Endothelial cell of umbilical vein (primary cell): ENCODE measurements at regions of chr3 and their contacts with region 1.

Region 1: GRCh38 chr3:101573449-101574387 is at the start of gene PCNP:
- DNase-seq: peak; percentile 99
- H3K4me3 ChIP-seq: peak within 1 kb of the TSS; percentile 23 to 95 (median 87)
- H3K27ac ChIP-seq: peak within 1 kb of the TSS; percentile 90
- H3K4me1 ChIP-seq: peaks cover 8% of the 10 kb centered on the region
- H3K27me3 ChIP-seq: no peaks in the 10 kb centered on the region
- CTCF ChIP-seq: peak; percentile 74 to 81
- POLR2A ChIP-seq: peak; percentile 78
- total RNA-seq, gene PCNP: 137 and 155 TPM in 2 replicates

Region 2: GRCh38 chr3:101377209-101377608 is 196.5 kb before region 1 on chr3:
- CTCF ChIA-PET with region 1: no interaction called
- POLR2A ChIA-PET with region 1: no interaction called
- dilution Hi-C with region 1: no loop called
- intact Hi-C with region 1: no loop called
- DNase-seq: peak; percentile 1
- H3K4me3 ChIP-seq: no peak overlapping the region
- H3K27ac ChIP-seq: no peak overlapping the region
- H3K4me1 ChIP-seq: no peaks in the 10 kb centered on the region
- H3K27me3 ChIP-seq: no peaks in the 10 kb centered on the region
- CTCF ChIP-seq: no peak
- POLR2A ChIP-seq: no peak

Region 3: DNA sequence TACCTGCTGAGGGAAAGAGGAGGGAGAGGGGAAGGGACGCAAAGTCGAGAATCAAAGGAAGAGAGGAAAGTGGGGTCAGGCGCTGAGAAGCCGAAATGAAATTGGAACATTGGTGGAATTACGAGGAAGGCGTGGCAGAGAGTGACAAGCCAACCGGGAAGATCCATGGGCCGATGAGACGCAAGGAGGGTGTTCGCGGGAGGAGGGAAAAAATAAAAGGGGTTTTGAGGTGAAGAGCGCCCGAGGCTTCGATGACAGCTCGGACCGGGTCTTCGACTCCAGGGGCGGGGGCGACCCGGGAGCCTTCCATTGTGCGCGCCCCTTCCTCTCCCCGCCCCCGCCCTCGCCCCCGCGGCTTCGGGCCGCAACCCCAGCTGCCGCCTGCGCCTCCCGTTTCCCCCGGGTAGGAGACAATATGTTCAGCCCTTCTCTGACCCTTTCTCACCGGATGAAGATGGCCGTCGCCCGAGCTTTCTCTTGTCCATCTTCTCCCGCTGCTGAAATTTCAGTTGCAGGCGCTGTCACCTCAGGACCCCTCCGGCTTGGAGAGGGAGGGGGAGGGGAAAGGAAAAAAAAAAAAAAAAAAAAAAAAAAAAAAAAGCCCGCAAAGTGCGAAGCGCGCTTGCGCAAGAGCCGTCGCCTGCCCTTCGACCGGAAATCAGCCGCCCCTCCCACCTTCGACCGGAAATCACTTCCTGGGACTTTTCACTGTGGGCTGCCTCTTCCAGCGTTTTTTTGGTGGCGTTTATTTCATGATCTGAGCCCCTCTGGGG is 60.9 kb before region 1 on chr3 and contains the start of gene SENP7:
- CTCF ChIA-PET with region 1: interaction called, 7 read pairs
- POLR2A ChIA-PET with region 1: interaction called, 3 read pairs
- dilution Hi-C with region 1: no loop called
- intact Hi-C with region 1: loop called (anchors 1 kb)
- DNase-seq: peak; percentile 86
- H3K4me3 ChIP-seq: peak within 1 kb of the TSS; percentile 70 to 91 (median 74)
- H3K27ac ChIP-seq: peak within 1 kb of the TSS; percentile 93
- H3K4me1 ChIP-seq: peaks cover 13% of the 10 kb centered on the region
- H3K27me3 ChIP-seq: no peaks in the 10 kb centered on the region
- CTCF ChIP-seq: no peak
- POLR2A ChIP-seq: peak; percentile 81
- total RNA-seq, gene SENP7: 18.7 and 20.2 TPM in 2 replicates

Region 4: DNA sequence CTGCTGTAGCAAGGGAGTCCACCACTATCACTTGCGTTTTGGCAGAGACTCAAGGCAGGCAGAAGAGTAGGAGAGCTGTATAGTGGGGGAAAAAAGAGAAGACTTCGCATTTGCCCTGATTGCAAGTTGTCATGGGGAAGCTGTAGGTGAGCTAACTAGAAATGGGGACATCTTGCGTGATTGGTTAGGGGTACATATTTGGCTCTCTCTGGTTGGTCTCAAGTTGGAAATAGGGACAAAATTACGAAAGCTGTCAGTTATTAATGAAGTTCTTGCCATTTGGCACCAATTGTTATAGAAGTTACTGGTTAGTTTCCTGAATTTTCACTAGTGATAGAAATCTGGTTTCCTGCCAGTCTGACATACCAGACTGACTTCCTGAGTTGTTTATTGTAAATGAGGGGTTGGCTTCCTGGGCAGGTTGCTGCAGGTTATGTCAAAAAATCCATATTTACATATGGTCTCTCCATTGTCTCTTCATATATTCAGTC is 52.5 kb before region 1 on chr3:
- CTCF ChIA-PET with region 1: interaction called, 8 read pairs
- POLR2A ChIA-PET with region 1: no interaction called
- dilution Hi-C with region 1: no loop called
- intact Hi-C with region 1: loop called (anchors 1 kb)
- DNase-seq: peak; percentile 92
- H3K4me3 ChIP-seq: peak overlapping the region in 1 of 3 experiments; percentile 10
- H3K27ac ChIP-seq: peak overlapping the region; percentile 96
- H3K4me1 ChIP-seq: peaks cover 37% of the 10 kb centered on the region
- H3K27me3 ChIP-seq: no peaks in the 10 kb centered on the region
- CTCF ChIP-seq: no peak
- POLR2A ChIP-seq: peak; percentile 46

Region 5: DNA sequence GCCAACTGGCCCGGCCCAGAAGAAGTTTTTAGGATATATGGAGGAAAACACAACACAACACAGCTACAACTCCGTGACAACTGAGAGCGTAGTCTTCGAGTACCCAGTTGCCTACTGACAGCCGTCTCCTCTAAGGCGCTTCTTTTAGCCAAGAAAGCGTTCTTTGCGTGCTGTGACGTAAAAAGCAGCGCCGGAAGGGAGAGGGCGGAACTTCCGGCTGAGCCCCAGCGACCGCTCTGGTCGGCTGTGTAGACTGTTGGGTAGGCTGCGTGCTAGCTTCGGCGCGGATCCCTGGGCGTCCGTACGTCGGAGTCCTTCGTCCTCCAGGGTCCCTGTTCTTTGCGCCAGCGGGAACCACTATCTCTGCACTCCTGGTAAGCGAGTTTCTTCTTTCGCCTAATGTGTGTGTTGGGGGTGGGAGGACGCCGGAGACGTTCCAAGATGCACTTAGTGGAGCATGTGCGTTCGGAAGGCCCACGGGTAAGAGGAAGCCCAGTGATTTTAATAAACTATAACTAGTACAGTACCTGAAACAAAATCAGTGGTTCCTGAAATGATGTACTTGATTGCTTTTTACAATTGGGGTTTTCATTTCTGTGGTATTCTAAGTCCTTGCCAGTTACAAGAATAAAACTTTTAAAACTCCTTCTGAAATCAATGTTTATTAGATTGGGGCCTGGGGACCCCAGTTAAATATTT is 11.9 kb before region 1 on chr3 and contains the start of gene TRMT10C:
- CTCF ChIA-PET with region 1: interaction called, 20 read pairs
- POLR2A ChIA-PET with region 1: no interaction called
- dilution Hi-C with region 1: no loop called
- intact Hi-C with region 1: loop called (anchors 1 kb)
- DNase-seq: peak; percentile 95
- H3K4me3 ChIP-seq: peak within 1 kb of the TSS; percentile 97 to 98 (median 98)
- H3K27ac ChIP-seq: peak within 1 kb of the TSS; percentile 89
- H3K4me1 ChIP-seq: peaks cover 10% of the 10 kb centered on the region
- H3K27me3 ChIP-seq: peaks cover 0 to 10% of the 10 kb centered on the region in 2 experiments
- CTCF ChIP-seq: no peak
- POLR2A ChIP-seq: peak; percentile 94
- total RNA-seq, gene TRMT10C: 28.0 and 29.6 TPM in 2 replicates

Region 6: DNA sequence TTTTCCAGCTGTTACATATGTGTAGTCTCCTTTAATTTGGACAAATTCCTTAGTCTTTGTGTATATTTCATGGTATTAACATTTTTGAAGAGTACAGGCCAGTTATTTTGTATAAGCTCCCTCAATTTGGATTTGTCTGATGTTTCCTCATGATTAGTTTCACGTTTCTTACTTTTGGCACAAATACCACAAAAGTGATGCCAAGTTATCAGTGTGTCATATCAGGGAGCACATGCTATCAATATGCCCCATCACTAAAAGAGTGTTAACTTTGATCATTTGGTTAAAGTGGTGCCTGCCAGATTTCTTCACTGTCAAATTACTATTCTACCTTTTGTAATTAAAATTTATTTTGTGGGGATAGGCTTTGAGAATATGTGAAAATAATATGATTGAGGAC is 14.9 kb after region 1 on chr3:
- CTCF ChIA-PET with region 1: interaction called, 19 read pairs
- POLR2A ChIA-PET with region 1: interaction called, 3 read pairs
- dilution Hi-C with region 1: no loop called
- intact Hi-C with region 1: no loop called
- DNase-seq: no peak
- H3K4me3 ChIP-seq: no peak overlapping the region
- H3K27ac ChIP-seq: no peak overlapping the region
- H3K4me1 ChIP-seq: peaks cover 7% of the 10 kb centered on the region
- H3K27me3 ChIP-seq: no peaks in the 10 kb centered on the region
- CTCF ChIP-seq: no peak
- POLR2A ChIP-seq: no peak

Region 7: GRCh38 chr3:101635954-101636798 is 62.5 kb after region 1 on chr3:
- CTCF ChIA-PET with region 1: interaction called, 6 read pairs
- POLR2A ChIA-PET with region 1: no interaction called
- dilution Hi-C with region 1: no loop called
- intact Hi-C with region 1: loop called (anchors 1 kb)
- DNase-seq: peak; percentile 60
- H3K4me3 ChIP-seq: no peak overlapping the region
- H3K27ac ChIP-seq: no peak overlapping the region
- H3K4me1 ChIP-seq: no peaks in the 10 kb centered on the region
- H3K27me3 ChIP-seq: no peaks in the 10 kb centered on the region
- CTCF ChIP-seq: peak; percentile 69 to 71
- POLR2A ChIP-seq: no peak

Region 8: DNA sequence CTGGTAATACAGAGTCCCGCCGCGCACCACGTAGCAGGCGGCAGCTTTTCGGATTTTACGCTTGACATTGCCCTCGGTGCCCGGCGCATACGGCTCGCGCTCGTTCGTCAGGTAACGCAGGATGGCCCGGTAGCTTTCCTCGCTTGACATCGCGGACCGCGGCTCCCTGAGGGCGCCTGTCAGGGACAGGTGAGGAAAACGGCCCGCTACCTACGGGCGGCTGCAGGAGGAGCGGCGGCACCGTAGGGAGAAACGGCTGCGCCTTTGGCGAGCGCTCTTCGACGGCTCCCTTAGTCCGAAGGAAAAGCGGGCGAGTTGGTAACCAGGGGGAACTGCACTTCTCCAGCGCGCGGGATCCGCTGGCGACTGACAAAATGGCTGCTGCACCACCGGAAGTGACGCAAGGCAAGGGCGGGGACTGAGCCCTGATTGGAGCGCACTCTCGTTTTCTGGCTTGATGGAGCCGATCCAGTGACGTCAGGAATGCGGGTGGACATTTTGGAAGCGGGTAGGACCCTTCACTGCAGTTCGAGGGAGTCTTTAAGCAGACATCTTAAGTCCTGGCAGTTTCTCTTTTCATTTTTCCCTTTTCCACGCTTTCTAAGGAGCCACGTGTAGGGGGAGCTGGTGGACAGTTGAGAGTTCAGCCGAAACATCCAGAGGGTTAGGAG is 103.2 kb after region 1 on chr3 and contains the start of gene ZBTB11:
- CTCF ChIA-PET with region 1: interaction called, 11 read pairs
- POLR2A ChIA-PET with region 1: interaction called, 3 read pairs
- dilution Hi-C with region 1: no loop called
- intact Hi-C with region 1: loop called (anchors 1 kb)
- DNase-seq: peak; percentile 100
- H3K4me3 ChIP-seq: peak within 1 kb of the TSS; percentile 67 to 80 (median 76)
- H3K27ac ChIP-seq: peak within 1 kb of the TSS; percentile 52
- H3K4me1 ChIP-seq: peaks cover 16% of the 10 kb centered on the region
- H3K27me3 ChIP-seq: no peaks in the 10 kb centered on the region
- CTCF ChIP-seq: peak; percentile 56 to 67
- POLR2A ChIP-seq: peak; percentile 62
- total RNA-seq, gene ZBTB11: 14.7 and 15.8 TPM in 2 replicates